CD4-positive, alpha-beta T cell (primary cell): ENCODE measurements at regions of chr12 and their contacts with region 1.

Region 1: DNA sequence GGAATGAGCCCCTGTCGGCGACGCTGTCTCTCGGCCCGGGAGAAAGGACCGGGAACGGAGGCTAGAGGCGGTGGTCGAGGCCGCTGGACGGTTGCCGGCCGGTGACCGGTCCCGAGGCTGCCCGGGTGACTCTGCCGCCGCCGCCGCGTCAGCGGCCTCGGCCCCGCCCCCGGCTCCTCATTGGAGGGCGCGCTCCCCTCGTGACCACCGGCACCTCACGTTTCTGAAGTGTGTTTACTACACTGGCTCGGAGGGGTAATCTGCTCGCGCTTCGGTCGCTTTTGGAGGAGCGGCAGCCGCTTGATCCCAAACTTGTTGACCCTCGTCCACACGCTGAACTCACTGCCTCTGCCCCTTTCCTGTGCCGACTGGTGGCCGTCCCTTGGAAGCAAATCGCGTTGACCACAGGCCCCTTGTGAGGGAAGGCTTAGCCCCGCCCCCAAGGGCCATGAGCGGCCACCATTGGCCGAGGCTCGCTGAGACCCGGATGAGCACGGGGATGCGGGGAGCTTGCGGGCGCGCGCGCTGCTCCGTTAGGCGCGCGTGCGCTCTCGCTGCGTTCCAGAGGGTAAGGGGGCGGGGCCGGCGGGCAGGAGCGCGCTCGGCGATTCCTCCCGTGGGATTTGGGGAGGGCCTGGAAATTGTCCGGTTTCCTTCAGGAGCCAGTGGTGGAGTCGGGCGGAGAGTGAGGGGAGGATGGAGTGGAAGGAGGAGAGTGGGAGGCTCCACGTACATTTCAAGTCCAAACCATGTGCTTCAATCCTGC is at the start of gene CRY1:
- DNase-seq: peak; percentile 86 to 96 (median 91)
- ATAC-seq: peak; percentile 75
- H3K4me3 ChIP-seq: peak within 1 kb of the TSS; percentile 90
- H3K4me3 Mint-ChIP-seq: no peak within 1 kb of the TSS
- H3K27ac ChIP-seq: peak within 1 kb of the TSS; percentile 99
- H3K27ac Mint-ChIP-seq: no peak within 1 kb of the TSS
- H3K4me1 ChIP-seq: peaks cover 31% of the 10 kb centered on the region
- H3K4me1 Mint-ChIP-seq: peaks cover 17% of the 10 kb centered on the region
- H3K27me3 ChIP-seq: no peaks in the 10 kb centered on the region
- H3K27me3 Mint-ChIP-seq: peaks cover 10% of the 10 kb centered on the region
- CTCF ChIP-seq: no peak
- total RNA-seq, gene CRY1: 70.7 to 77.4 TPM

Region 2: DNA sequence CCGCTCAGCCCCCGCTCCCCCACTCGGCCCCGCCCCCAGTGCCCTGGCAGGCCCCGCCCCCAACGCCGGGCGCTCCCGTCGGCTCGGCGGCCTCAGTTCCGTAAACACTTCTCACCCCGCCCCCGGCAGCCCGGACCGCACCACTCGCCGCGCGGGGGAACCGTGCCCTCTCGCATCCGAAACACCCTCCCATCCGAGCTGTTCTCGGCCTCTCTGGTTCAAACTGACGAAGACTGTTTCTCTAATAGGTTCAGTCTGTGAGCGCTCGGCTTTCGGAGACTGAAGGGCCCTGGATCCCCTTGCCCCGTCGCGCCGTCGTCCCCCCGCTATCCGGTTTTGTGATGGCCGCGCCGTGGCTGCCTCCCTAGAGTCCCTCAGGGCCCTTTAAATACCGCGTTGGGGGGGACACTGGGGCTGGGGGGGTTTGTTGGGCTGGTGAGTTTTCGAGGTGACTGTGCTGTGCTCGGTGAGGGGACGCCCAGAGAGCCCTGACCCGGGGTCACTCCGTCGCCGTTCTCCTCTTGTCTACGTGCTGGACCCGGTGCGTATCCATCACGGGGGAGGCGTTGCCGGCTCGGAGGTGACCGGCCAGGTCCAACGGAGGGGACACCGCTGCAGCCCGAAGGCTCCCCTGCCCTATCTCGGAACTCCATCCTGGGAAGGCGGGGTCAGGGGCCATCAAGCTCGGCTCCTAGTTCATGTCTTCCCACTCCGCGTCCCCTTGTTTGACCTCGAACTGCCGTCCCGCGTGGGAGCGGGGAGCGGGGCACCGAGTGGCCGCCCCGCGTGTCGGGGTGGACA is 791.0 kb before region 1 on chr12 and contains the start of gene TCP11L2:
- CTCF ChIA-PET with region 1: no interaction called
- POLR2A ChIA-PET with region 1: interaction called, 25 read pairs
- intact Hi-C with region 1: loop called (anchors 1 to 5 kb)
- DNase-seq: peak; percentile 89 to 97 (median 92)
- ATAC-seq: peak; percentile 49
- H3K4me3 ChIP-seq: peak within 1 kb of the TSS; percentile 97
- H3K4me3 Mint-ChIP-seq: peak within 1 kb of the TSS; percentile 99
- H3K27ac ChIP-seq: peak within 1 kb of the TSS; percentile 99 to 100
- H3K27ac Mint-ChIP-seq: peak within 1 kb of the TSS; percentile 99
- H3K4me1 ChIP-seq: peaks cover 49% of the 10 kb centered on the region
- H3K4me1 Mint-ChIP-seq: peaks cover 64% of the 10 kb centered on the region
- H3K27me3 ChIP-seq: no peaks in the 10 kb centered on the region
- H3K27me3 Mint-ChIP-seq: no peaks in the 10 kb centered on the region
- CTCF ChIP-seq: no peak
- total RNA-seq, gene TCP11L2: 139 to 144 TPM

Region 3: DNA sequence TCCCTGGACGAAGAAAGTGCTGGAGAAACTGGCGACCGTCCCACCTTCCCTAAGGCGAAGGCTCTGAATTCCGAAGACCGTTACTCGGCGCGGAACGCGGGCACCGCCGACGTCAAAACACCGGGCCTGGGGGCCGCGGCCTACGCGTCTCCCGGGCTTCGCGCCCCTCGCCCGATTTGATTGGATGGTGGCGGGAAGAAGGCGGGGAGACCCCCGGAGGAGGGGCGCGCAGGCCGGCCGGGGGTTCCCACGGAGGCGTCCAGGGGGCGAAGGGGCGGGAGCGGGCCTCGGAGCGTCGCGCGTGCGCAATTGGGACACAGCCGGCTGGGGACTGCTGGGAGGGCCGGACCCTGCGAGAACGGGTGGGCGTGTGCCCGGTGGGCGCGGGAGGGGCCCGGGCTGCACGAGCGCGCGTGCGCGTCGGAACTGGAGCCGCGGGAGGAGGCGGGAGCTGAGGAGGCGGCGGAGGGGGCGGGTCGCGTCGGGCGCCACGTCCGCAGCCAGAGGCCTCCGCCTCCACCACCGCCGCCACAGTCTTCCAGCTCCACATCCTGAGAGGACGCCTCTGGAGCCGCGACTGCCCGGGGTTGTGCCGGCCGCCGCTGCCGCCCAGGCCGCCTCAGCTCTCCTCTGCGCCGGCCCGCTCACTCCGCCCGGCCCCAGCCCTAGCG is 138.1 kb before region 1 on chr12 and contains the start of gene TMEM263:
- CTCF ChIA-PET with region 1: no interaction called
- POLR2A ChIA-PET with region 1: interaction called, 48 read pairs
- intact Hi-C with region 1: loop called (anchors 2 kb)
- DNase-seq: peak; percentile 74 to 97 (median 88)
- ATAC-seq: peak; percentile 73
- H3K4me3 ChIP-seq: peak within 1 kb of the TSS; percentile 77
- H3K4me3 Mint-ChIP-seq: peak within 1 kb of the TSS; percentile 98
- H3K27ac ChIP-seq: peak within 1 kb of the TSS; percentile 81 to 89
- H3K27ac Mint-ChIP-seq: peak within 1 kb of the TSS; percentile 98
- H3K4me1 ChIP-seq: peaks cover 13% of the 10 kb centered on the region
- H3K4me1 Mint-ChIP-seq: peaks cover 43% of the 10 kb centered on the region
- H3K27me3 ChIP-seq: no peaks in the 10 kb centered on the region
- H3K27me3 Mint-ChIP-seq: no peaks in the 10 kb centered on the region
- CTCF ChIP-seq: no peak
- total RNA-seq, gene TMEM263: 33.2 to 33.4 TPM

Region 4: DNA sequence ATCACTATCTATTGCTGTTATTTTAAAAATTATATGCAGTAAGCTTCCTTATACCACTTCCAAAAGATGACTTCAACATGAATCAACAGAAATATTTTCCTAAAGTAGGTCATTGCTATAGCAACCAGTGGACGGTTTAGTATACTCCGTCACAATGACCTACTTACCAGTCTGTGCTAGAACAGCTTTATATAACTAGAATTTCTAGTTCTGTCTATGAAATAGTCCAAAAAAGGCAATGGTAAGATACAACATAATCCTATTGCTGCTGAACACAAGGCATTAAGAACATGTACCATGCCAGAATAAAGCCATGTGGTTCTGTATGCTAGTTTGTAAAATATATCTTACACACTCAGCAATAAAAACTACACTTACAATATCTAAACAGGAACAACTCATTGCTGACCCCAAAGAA is 66.0 kb before region 1 on chr12:
- CTCF ChIA-PET with region 1: interaction called, 8 read pairs
- POLR2A ChIA-PET with region 1: interaction called, 9 read pairs
- intact Hi-C with region 1: loop called in 1 of 2 experiments (anchors 5 kb)
- DNase-seq: peak in 3 of 14 experiments; percentile 84 to 91 (median 90)
- ATAC-seq: peak; percentile 93
- H3K4me3 ChIP-seq: no peak overlapping the region
- H3K4me3 Mint-ChIP-seq: peak overlapping the region; percentile 36
- H3K27ac ChIP-seq: peak overlapping the region; percentile 66 to 82
- H3K27ac Mint-ChIP-seq: peak overlapping the region; percentile 86
- H3K4me1 ChIP-seq: peaks cover 13% of the 10 kb centered on the region
- H3K4me1 Mint-ChIP-seq: peaks cover 70% of the 10 kb centered on the region
- H3K27me3 ChIP-seq: no peaks in the 10 kb centered on the region
- H3K27me3 Mint-ChIP-seq: no peaks in the 10 kb centered on the region
- CTCF ChIP-seq: no peak

Region 5: DNA sequence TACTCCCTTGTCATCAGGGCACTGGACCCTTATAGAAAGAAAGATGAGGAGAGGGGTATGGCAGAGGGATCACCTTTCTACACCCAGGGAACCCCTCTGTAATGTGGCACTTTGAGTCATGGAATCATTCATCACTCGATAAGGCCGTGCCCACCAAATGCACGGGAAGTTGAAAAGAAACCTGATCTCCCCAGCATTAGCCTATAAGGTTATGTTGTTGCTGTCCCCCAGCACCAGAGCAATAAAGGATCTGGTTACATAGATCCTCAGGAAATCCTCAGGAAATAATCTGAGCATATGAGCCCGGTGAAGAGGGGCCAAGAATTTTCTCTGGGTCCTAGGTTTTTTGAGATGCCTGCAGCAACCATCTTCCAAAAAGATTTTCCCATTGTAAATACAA is 148.6 kb after region 1 on chr12:
- CTCF ChIA-PET with region 1: no interaction called
- POLR2A ChIA-PET with region 1: no interaction called
- intact Hi-C with region 1: no loop called
- DNase-seq: no peak
- ATAC-seq: no peak
- H3K4me3 ChIP-seq: no peak overlapping the region
- H3K4me3 Mint-ChIP-seq: no peak overlapping the region
- H3K27ac ChIP-seq: no peak overlapping the region
- H3K27ac Mint-ChIP-seq: no peak overlapping the region
- H3K4me1 ChIP-seq: peaks cover 4% of the 10 kb centered on the region
- H3K4me1 Mint-ChIP-seq: peaks cover 8% of the 10 kb centered on the region
- H3K27me3 ChIP-seq: peaks cover 0 to 6% of the 10 kb centered on the region in 2 experiments
- H3K27me3 Mint-ChIP-seq: peaks cover 5% of the 10 kb centered on the region
- CTCF ChIP-seq: no peak

Region 6: GRCh38 chr12:107372229-107372658 is 278.6 kb after region 1 on chr12:
- CTCF ChIA-PET with region 1: no interaction called
- POLR2A ChIA-PET with region 1: interaction called, 13 read pairs
- intact Hi-C with region 1: no loop called
- DNase-seq: peak in 9 of 14 experiments; percentile 9 to 85 (median 30)
- ATAC-seq: peak; percentile 74
- H3K4me3 ChIP-seq: peak overlapping the region; percentile 4
- H3K4me3 Mint-ChIP-seq: peak overlapping the region; percentile 68
- H3K27ac ChIP-seq: peak overlapping the region; percentile 54 to 69
- H3K27ac Mint-ChIP-seq: peak overlapping the region; percentile 86
- H3K4me1 ChIP-seq: peaks cover 72% of the 10 kb centered on the region
- H3K4me1 Mint-ChIP-seq: peaks cover 87% of the 10 kb centered on the region
- H3K27me3 ChIP-seq: no peaks in the 10 kb centered on the region
- H3K27me3 Mint-ChIP-seq: no peaks in the 10 kb centered on the region
- CTCF ChIP-seq: no peak